ENCODE measurements at regions of chr3 and their contacts with region 1.

Region 1: GRCh38 chr3:141738022-141738890 is at the start of gene RNF7:
- DNase-seq: peak; percentile 90 to 99 (median 97)
- ATAC-seq: peak; percentile 89 to 99 (median 92)
- H3K4me3 ChIP-seq: peak within 1 kb of the TSS; percentile 97
- H3K4me3 Mint-ChIP-seq: peak within 1 kb of the TSS; percentile 95 to 99 (median 95)
- H3K27ac ChIP-seq: peak within 1 kb of the TSS; percentile 94
- H3K27ac Mint-ChIP-seq: peak within 1 kb of the TSS; percentile 96 to 98
- H3K4me1 ChIP-seq: peaks cover 17 to 18% of the 10 kb centered on the region in 2 experiments
- H3K4me1 Mint-ChIP-seq: peaks cover 40 to 52% (median 43%) of the 10 kb centered on the region in 3 donors
- H3K27me3 ChIP-seq: no peaks in the 10 kb centered on the region
- H3K27me3 Mint-ChIP-seq: no peaks in the 10 kb centered on the region
- total RNA-seq, gene RNF7: 53.5 to 61.2 (median 55.5) TPM

Region 2: GRCh38 chr3:141519587-141519986 is 218.7 kb before region 1 on chr3:
- CTCF ChIA-PET with region 1: no interaction called
- POLR2A ChIA-PET with region 1: no interaction called
- DNase-seq: no peak
- ATAC-seq: no peak
- H3K4me3 ChIP-seq: no peak overlapping the region
- H3K4me3 Mint-ChIP-seq: peak overlapping the region in 2 of 3 donors; percentile 18 to 41
- H3K27ac ChIP-seq: no peak overlapping the region
- H3K27ac Mint-ChIP-seq: peak overlapping the region; percentile 73 to 76
- H3K4me1 ChIP-seq: peaks cover 12 to 19% of the 10 kb centered on the region in 2 experiments
- H3K4me1 Mint-ChIP-seq: peaks cover 59 to 62% (median 62%) of the 10 kb centered on the region in 3 donors
- H3K27me3 ChIP-seq: no peaks in the 10 kb centered on the region
- H3K27me3 Mint-ChIP-seq: no peaks in the 10 kb centered on the region

Region 3: GRCh38 chr3:141828487-141829268 is 90.4 kb after region 1 on chr3:
- CTCF ChIA-PET with region 1: no interaction called
- POLR2A ChIA-PET with region 1: no interaction called
- DNase-seq: no peak
- ATAC-seq: no peak
- H3K4me3 ChIP-seq: no peak overlapping the region
- H3K4me3 Mint-ChIP-seq: no peak overlapping the region
- H3K27ac ChIP-seq: no peak overlapping the region
- H3K27ac Mint-ChIP-seq: no peak overlapping the region
- H3K4me1 ChIP-seq: no peaks in the 10 kb centered on the region
- H3K4me1 Mint-ChIP-seq: no peaks in the 10 kb centered on the region
- H3K27me3 ChIP-seq: peaks cover 0 to 5% of the 10 kb centered on the region in 2 experiments
- H3K27me3 Mint-ChIP-seq: no peaks in the 10 kb centered on the region

Region 4: GRCh38 chr3:141913150-141913811 is 175.0 kb after region 1 on chr3:
- CTCF ChIA-PET with region 1: interaction called, 5 to 24 read pairs
- POLR2A ChIA-PET with region 1: interaction called in 1 of 2 experiments, 8 read pairs
- DNase-seq: peak in 33 of 35 experiments; percentile 5 to 76 (median 42)
- ATAC-seq: peak; percentile 73 to 83 (median 80)
- H3K4me3 ChIP-seq: no peak overlapping the region
- H3K4me3 Mint-ChIP-seq: no peak overlapping the region
- H3K27ac ChIP-seq: no peak overlapping the region
- H3K27ac Mint-ChIP-seq: no peak overlapping the region
- H3K4me1 ChIP-seq: no peaks in the 10 kb centered on the region
- H3K4me1 Mint-ChIP-seq: peaks cover 0 to 2% (median 2%) of the 10 kb centered on the region in 3 donors
- H3K27me3 ChIP-seq: no peaks in the 10 kb centered on the region
- H3K27me3 Mint-ChIP-seq: no peaks in the 10 kb centered on the region

Region 5: GRCh38 chr3:142385078-142385477 is 646.8 kb after region 1 on chr3:
- CTCF ChIA-PET with region 1: no interaction called
- POLR2A ChIA-PET with region 1: no interaction called
- DNase-seq: no peak
- ATAC-seq: no peak
- H3K4me3 ChIP-seq: no peak overlapping the region
- H3K4me3 Mint-ChIP-seq: no peak overlapping the region
- H3K27ac ChIP-seq: no peak overlapping the region
- H3K27ac Mint-ChIP-seq: no peak overlapping the region
- H3K4me1 ChIP-seq: no peaks in the 10 kb centered on the region
- H3K4me1 Mint-ChIP-seq: no peaks in the 10 kb centered on the region
- H3K27me3 ChIP-seq: no peaks in the 10 kb centered on the region
- H3K27me3 Mint-ChIP-seq: no peaks in the 10 kb centered on the region

Region 6: DNA sequence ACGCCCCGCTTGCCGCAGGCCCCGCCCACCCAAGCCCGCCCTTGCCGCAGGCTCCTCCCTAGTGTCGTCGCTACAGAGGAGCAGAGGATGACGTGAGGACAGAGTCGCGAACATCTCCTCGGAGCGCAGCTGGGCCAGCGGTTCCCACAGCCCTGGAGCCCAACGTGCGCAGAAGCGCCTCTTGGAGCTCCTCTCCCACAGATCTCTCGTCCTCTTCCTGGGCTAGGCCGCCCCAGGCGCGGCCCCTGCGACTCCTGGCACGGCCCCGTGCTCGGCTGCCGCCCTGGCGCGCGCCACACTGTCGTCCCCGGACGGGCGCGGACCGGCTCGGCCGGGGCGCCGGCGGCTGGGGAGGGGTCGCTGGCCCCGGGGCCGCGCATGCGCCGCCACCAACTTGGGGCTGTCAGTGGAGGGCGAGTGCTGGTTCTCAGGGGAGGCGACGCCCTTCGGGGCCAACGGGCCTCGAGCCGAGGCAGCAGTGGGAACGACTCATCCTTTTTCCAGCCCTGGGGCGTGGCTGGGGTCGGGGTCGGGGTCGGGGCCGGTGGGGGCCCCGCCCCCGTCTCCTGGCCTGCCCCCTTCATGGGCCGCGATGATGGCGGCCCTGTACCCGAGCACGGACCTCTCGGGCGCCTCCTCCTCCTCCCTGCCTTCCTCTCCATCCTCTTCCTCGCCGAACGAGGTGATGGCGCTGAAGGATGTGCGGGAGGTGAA is 985.9 kb after region 1 on chr3 and contains the start of gene TRPC1:
- CTCF ChIA-PET with region 1: no interaction called
- POLR2A ChIA-PET with region 1: interaction called in 1 of 2 experiments, 12 read pairs
- DNase-seq: peak in 34 of 35 experiments; percentile 55 to 91 (median 74)
- ATAC-seq: peak; percentile 92 to 95 (median 94)
- H3K4me3 ChIP-seq: peak within 1 kb of the TSS; percentile 56 to 69
- H3K4me3 Mint-ChIP-seq: peak within 1 kb of the TSS; percentile 84 to 89 (median 87)
- H3K27ac ChIP-seq: peak within 1 kb of the TSS; percentile 62
- H3K27ac Mint-ChIP-seq: peak within 1 kb of the TSS; percentile 70 to 90
- H3K4me1 ChIP-seq: peaks cover 0 to 11% of the 10 kb centered on the region in 2 experiments
- H3K4me1 Mint-ChIP-seq: peaks cover 11 to 32% (median 13%) of the 10 kb centered on the region in 3 donors
- H3K27me3 ChIP-seq: peaks cover 2 to 10% of the 10 kb centered on the region in 2 experiments
- H3K27me3 Mint-ChIP-seq: peaks cover 24 to 25% of the 10 kb centered on the region in 2 donors
- total RNA-seq, gene TRPC1: 3.9 to 7.5 (median 4.4) TPM